ENCODE measurements at regions of chr11 and their contacts with region 1.

Region 1: DNA sequence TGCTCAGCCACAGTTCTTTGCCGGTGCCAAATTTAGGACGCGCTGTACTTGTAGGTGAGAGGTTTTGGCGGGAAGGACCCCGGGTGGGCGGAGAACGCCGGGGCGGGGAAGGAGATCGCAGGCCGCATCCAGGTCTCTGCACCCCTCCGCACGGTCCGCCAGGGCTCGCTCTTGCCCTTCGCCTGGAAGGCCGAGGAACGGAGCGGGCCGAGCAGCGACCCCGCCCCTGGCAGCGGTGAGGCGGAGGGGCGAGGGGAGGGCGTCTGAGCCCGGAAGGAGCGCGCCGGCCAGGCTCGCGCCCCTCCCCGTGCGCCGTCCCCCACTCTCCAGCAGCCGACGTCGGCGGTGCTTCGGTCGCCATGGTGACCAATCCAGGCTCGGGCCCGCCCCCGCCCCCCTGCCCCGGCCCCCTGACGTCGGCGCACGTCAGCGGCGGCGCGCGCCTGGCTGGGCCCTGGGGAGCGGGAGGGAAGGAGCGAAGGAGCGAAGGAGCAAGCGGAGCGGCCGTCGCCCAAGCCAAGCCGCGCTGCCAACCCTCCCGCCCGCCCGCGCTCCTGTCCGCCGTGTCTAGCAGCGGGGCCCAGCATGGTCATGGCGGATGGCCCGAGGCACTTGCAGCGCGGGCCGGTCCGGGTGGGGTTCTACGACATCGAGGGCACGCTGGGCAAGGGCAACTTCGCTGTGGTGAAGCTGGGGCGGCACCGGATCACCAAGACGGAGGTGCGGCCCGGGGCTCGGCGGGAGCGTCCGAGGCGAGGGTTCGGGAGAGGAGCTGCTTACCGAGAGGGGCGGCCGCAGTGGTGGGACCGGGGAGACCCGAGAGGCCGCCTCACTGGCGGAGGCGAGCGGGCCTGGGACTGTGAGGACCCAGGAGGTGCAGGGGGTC is at the start of gene SIK2:
- DNase-seq: peak; percentile 94 to 95
- ATAC-seq: peak; percentile 94 to 97 (median 96)
- H3K4me3 ChIP-seq: peak within 1 kb of the TSS; percentile 58 to 98 (median 94)
- H3K27ac ChIP-seq: peak within 1 kb of the TSS; percentile 88 to 99 (median 98)
- H3K4me1 ChIP-seq: peaks cover 4 to 60% (median 43%) of the 10 kb centered on the region in 9 donors
- H3K27me3 ChIP-seq: no peaks in the 10 kb centered on the region
- CTCF ChIP-seq: peak; percentile 83 to 99 (median 94)
- total RNA-seq, gene SIK2: 17.3 to 41.6 (median 30.8) TPM

Region 2: DNA sequence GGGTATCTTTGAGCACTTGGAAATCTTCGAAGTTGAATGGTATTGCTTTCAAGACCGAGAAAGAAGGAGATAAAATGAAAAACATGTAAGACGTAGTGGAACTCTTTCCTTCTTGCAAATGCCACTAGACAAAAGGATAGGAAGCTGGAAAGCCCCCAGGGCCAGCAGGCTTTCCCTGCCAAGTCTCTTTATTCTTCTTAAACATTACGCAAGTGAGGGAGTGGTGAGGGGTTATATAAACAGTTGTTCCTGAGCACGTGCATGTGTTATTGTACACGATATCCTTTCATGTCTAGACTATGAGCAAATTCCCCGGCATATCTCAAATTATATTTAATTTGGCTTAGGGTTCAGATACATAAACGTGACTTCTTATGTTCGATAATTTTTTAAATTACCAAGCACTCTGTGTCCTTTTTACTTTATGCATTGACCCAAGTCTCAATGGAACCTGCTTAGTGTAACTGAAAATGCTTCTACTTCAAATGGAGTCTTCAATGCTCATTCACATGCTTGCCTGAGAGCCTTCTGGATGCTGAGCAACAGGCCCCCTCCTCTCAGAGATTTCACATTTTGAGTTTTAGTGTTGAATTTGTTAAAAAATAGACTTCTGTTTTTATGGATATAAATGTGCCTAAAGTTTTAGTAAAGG is 104.9 kb after region 1 on chr11:
- intact Hi-C with region 1: loop called in 2 of 10 experiments (anchors 10 kb)
- DNase-seq: peak; percentile 38 to 61
- ATAC-seq: peak; percentile 29 to 93 (median 86)
- H3K4me3 ChIP-seq: no peak overlapping the region
- H3K27ac ChIP-seq: peak overlapping the region in 6 of 10 donors; percentile 2 to 67 (median 37)
- H3K4me1 ChIP-seq: peaks cover 0 to 30% (median 11%) of the 10 kb centered on the region in 9 donors
- H3K27me3 ChIP-seq: no peaks in the 10 kb centered on the region
- CTCF ChIP-seq: no peak

Region 3: GRCh38 chr11:111729087-111729830 is 127.0 kb after region 1 on chr11:
- intact Hi-C with region 1: loop called in 2 of 10 experiments (anchors 2 to 10 kb)
- DNase-seq: no peak
- ATAC-seq: peak in 3 of 8 donors; percentile 2 to 13 (median 8)
- H3K4me3 ChIP-seq: peak overlapping the region in 3 of 10 donors; percentile 2 to 22 (median 5)
- H3K27ac ChIP-seq: peak overlapping the region; percentile 19 to 97 (median 74)
- H3K4me1 ChIP-seq: peaks cover 44 to 65% (median 55%) of the 10 kb centered on the region in 9 donors
- H3K27me3 ChIP-seq: no peaks in the 10 kb centered on the region
- CTCF ChIP-seq: no peak

Region 4: GRCh38 chr11:111735262-111736116 is 133.3 kb after region 1 on chr11:
- intact Hi-C with region 1: loop called in 2 of 10 experiments (anchors 1 to 10 kb)
- DNase-seq: peak; percentile 73 to 88
- ATAC-seq: peak; percentile 68 to 85 (median 78)
- H3K4me3 ChIP-seq: peak overlapping the region in 9 of 10 donors; percentile 28 to 60 (median 51)
- H3K27ac ChIP-seq: peak overlapping the region; percentile 80 to 97 (median 94)
- H3K4me1 ChIP-seq: peaks cover 67 to 82% (median 79%) of the 10 kb centered on the region in 9 donors
- H3K27me3 ChIP-seq: no peaks in the 10 kb centered on the region
- CTCF ChIP-seq: peak in 1 of 9 donors; percentile 7

Region 5: DNA sequence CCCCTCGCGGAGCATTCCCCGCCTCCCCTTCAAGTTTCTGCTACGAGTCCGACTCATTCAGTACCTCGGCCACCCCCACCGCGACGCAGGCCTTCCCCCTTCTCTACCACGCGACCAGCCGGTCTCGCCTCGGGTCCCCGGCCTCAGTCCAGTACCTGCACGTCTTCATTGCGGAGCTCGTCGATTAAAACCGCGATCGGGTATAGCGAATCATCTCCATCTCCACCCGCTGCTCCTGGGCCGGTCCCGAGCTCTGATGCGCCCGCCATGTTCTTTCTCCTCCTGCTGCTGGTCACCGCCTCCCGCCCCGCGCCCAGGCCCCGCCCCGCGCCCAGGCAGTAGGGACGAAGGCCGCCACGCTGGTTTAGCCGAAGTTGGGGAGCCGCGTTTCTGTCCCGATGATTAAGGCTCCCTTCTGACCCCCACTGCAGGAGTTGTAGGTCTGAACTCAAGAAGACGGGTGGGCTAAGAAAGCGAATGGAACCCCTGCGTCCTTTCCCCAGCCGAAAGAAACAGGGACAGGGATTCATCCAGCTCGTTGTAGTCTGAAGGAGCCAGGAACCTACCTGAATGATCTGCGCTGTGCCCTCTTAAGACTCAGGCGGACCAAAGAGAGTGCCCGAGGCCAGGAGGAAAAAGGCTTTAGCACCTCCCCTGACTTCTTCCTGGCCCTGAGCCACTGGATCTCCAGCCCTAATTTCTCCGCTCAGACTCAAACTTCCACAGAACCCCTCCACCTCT is 164.0 kb after region 1 on chr11 and contains the start of gene PPP2R1B:
- intact Hi-C with region 1: loop called in 1 of 10 experiments (anchors 2 kb)
- DNase-seq: peak; percentile 76
- ATAC-seq: peak; percentile 97 to 99 (median 98)
- H3K4me3 ChIP-seq: peak within 1 kb of the TSS; percentile 68 to 97 (median 84)
- H3K27ac ChIP-seq: peak within 1 kb of the TSS; percentile 57 to 92 (median 86)
- H3K4me1 ChIP-seq: peaks cover 2 to 41% (median 28%) of the 10 kb centered on the region in 9 donors
- H3K27me3 ChIP-seq: no peaks in the 10 kb centered on the region
- CTCF ChIP-seq: no peak
- total RNA-seq, gene PPP2R1B: 8.4 to 16.8 (median 11.4) TPM

Region 6: GRCh38 chr11:111833524-111833923 is 231.3 kb after region 1 on chr11:
- intact Hi-C with region 1: loop called in 1 of 10 experiments (anchors 2 kb)
- DNase-seq: no peak
- ATAC-seq: peak in 3 of 8 donors; percentile 33 to 58 (median 58)
- H3K4me3 ChIP-seq: no peak overlapping the region
- H3K27ac ChIP-seq: peak overlapping the region in 1 of 10 donors; percentile 22
- H3K4me1 ChIP-seq: peaks cover 0 to 13% (median 3%) of the 10 kb centered on the region in 9 donors
- H3K27me3 ChIP-seq: no peaks in the 10 kb centered on the region
- CTCF ChIP-seq: peak in 7 of 9 donors; percentile 12 to 48 (median 38)

Region 7: GRCh38 chr11:111841370-111842053 is 239.3 kb after region 1 on chr11:
- intact Hi-C with region 1: loop called in 9 of 10 experiments (anchors 1 to 5 kb)
- DNase-seq: peak; percentile 81 to 89
- ATAC-seq: peak; percentile 81 to 94 (median 90)
- H3K4me3 ChIP-seq: no peak overlapping the region
- H3K27ac ChIP-seq: no peak overlapping the region
- H3K4me1 ChIP-seq: peaks cover 0 to 26% (median 10%) of the 10 kb centered on the region in 9 donors
- H3K27me3 ChIP-seq: no peaks in the 10 kb centered on the region
- CTCF ChIP-seq: peak; percentile 77 to 94 (median 90)

Measured in heart right ventricle (tissue), 16 donors.